ENCODE measurements at regions of chr7 and their contacts with region 1.

Region 1: GRCh38 chr7:70663680-70664079 is 468.3 kb upstream of the GALNT17 start:
- DNase-seq: no peak
- H3K4me3 ChIP-seq: no peak overlapping the region
- H3K27ac ChIP-seq: no peak overlapping the region
- H3K4me1 ChIP-seq: peaks cover 0 to 10% (median 6%) of the 10 kb centered on the region in 4 donors
- H3K27me3 ChIP-seq: no peaks in the 10 kb centered on the region
- CTCF ChIP-seq: no peak

Region 2: DNA sequence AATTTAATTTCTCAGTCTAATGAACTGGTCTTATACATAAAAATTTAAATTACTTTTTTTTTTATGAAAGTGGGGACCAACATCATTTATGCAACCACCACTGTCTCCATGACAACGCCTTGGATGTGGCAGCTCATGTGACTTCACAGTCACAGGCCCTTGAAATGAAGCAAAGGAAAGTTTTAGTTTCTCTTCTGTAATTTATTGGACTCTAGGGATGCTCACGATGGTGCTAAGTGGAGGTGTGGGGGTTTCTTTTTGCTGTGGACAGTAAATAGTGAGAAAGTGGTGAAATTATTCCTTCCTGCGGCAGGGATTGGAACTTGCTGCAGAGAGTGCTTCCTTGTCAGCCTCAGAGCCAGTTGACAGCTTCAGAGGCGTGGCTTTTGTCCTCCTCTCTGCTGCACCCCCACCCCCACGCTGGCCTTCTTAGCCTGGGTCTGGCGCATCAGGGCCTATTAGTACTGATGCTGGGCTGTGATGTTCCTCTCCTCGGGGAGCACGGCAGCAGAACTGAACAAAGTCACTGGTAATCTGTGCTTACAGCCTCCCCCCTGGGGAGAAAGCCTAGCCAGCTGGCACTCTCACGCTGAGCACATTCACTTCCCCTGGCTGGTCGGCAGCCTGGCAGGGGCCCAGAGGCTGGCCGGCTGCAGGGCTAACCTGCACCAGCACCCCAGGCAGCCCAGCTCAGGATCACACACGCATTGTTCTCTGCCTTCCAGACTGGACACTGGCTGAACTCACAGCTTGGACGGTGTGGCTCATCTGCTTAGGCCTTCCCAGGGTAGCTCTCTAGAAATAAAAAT is 49.2 kb before region 1 on chr7:
- intact Hi-C with region 1: loop called (anchors 2 kb)
- DNase-seq: peak; percentile 76 to 92
- H3K4me3 ChIP-seq: no peak overlapping the region
- H3K27ac ChIP-seq: no peak overlapping the region
- H3K4me1 ChIP-seq: peaks cover 0 to 14% (median 12%) of the 10 kb centered on the region in 4 donors
- H3K27me3 ChIP-seq: no peaks in the 10 kb centered on the region
- CTCF ChIP-seq: no peak

Region 3: DNA sequence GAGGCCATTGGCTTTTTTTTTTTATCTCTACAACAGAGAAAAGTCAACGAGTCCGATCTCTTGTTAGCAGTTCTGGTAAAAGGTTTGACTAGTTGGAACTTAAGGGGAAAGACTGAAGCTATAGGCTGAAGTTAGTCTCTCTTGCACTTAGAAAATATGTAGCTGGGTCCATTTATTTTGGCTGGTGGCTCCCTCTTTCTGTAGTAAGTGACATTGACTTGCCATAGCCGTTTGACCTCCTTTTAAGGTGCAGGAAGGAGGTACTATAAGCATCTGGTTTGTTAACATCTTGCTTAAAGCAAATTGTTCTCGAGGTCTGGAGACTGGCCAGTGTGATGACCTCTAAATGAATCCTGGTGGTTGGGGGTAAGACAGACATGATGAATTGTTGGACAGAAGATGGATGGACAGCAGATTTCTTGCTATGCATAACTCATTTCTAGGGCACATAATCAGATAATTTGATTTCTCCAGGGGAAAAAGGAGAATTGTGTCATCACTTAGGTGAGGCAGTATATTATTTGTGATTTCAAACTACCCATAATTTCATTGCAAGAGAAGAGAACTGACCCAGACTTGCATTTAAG is 112.0 kb after region 1 on chr7:
- intact Hi-C with region 1: no loop called
- DNase-seq: no peak
- H3K4me3 ChIP-seq: no peak overlapping the region
- H3K27ac ChIP-seq: no peak overlapping the region
- H3K4me1 ChIP-seq: no peaks in the 10 kb centered on the region
- H3K27me3 ChIP-seq: no peaks in the 10 kb centered on the region
- CTCF ChIP-seq: no peak

Measured in tibial artery (tissue), 4 donors.